ENCODE measurements at regions of chr11 and their contacts with region 1.

Region 1: DNA sequence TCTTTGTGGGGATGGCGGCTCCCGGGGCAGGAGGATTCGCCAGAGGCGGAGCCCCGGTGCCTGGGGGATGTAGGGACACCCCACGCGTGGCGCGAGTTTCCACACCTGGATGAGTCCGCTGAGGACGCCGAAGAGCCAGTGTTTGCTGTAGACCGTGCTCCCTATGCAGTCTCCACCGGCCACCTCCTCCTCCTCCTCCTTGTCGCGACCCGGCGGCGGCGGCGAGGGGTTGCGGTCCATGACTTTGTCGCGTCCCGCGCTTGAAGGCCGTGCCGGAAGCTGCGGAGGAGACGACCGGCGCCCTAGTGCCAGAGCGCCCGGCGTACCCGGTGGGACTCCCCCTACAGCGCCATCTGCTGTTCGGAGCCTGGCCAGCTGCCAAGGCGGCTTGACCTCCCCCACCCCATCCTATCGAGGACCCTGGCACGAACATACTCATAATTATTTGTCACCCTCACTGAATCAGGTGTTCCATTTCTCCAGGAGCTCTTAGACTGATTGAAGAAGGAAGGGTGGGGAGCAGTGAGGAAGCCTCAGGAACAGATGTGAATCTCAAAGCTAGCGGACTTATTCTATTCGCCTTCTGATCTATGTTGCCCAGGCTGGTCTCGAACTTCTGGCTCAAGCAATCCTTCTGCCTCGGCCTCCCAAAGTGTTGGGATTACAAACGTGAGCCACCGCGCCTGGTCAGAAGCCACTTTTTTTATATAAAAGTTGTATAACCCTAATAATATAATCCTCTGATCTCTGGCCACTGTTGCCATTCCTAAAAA is at the start of gene SAAL1:
- DNase-seq: peak; percentile 93
- ATAC-seq: peak; percentile 96
- total RNA-seq, gene SAAL1: 7.9 TPM

Region 2: GRCh38 chr11:17991783-17992433 is 114.1 kb before region 1 on chr11:
- intact Hi-C with region 1: loop called (anchors 5 kb)
- DNase-seq: no peak
- ATAC-seq: peak; percentile 44

Region 3: DNA sequence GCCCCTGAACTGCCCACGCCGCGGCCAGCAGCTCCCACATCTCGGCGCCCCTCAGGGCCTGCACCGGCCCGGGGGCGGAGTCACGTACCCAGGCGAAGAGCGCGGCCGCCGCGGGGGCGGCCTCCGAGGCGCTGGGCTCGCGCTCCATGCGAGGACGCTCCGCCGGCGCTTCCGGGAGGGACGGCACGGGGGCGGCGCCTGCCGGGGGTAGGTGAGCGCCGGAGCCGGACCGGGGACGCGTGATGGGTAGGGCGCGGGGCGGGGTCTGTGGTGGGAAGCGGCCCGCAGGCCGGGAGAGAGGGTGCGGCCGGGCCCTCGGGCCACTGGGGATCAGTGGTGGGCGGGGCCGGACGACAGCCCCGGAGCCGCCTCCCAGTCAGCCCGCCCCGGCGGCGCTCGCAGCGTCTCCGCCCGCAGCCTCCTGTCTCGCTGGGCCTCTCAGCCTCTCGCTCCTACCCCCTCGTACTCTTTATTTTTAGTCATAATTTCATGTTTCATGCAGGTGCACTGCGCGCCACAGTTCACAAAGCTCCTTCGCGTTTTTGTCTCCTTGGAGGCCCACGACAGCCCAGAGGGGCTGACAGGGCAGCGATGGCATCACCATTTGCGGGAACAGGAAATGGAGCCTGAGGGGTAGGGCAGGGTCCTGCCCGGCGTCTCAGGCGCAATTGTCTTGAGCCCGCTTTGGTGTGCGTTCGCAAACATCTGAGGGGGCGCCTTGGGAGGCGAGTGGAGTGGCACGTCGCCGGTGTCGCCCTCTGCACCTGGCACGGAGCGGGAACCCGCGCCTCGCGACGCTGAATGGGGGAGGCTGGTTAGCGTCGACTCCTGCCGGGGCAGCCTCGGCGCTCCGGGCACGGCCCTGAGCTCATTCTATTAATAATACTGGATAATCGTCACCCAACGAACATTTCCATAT is 92.9 kb before region 1 on chr11 and contains the start of gene SERGEF:
- intact Hi-C with region 1: loop called (anchors 5 kb)
- DNase-seq: peak; percentile 97
- ATAC-seq: peak; percentile 98
- total RNA-seq, gene SERGEF: 15.2 TPM

Measured in Right ventricle myocardium inferior (tissue), 1 donor.